ENCODE measurements at regions of chrX and their contacts with region 1.

Region 1: DNA sequence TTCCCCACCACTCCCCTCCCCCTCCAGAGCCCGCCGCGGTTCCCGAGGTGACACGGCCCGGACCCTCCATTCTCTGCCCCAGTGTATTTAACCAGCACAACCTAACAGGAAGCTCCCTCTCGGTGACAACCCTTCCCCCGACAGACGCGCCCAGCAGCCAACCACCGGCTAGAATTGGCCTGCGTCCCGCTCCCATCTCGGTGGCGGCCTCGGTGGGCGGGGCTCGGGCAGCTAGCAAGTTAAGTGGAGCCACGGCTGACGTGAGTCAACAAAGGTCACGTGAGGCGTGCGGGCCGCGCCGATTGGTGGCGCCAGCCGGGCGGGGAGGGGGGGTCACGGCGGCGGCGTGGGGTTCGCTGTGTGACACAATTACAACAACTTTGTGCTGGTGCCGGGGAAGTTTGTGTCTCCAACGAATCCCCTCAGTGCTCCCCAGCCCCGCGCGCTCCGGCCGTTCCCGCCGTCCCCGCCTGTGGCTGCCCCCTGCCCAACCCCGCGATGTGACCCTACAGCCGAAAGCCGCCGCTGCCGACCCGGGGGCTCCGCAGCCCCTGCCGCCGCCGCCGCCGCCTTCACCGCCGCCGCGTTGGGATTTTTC is at the start of gene KDM6A:
- H3K4me3 ChIP-seq: peak within 1 kb of the TSS; percentile 94
- H3K27ac ChIP-seq: peak within 1 kb of the TSS; percentile 99
- H3K4me1 ChIP-seq: no peaks in the 10 kb centered on the region
- CTCF ChIP-seq: no peak

Region 2: GRCh38 chrX:44542567-44543325 is 330.2 kb before region 1 on chrX and contains the start of gene FUNDC1:
- CTCF ChIA-PET with region 1: no interaction called
- POLR2A ChIA-PET with region 1: interaction called, 13 read pairs
- H3K4me3 ChIP-seq: peak within 1 kb of the TSS; percentile 93
- H3K27ac ChIP-seq: peak within 1 kb of the TSS; percentile 73
- H3K4me1 ChIP-seq: no peaks in the 10 kb centered on the region
- CTCF ChIP-seq: peak; percentile 28; the same call in 1 of the 2 replicates

Region 3: GRCh38 chrX:44637282-44637681 is 235.6 kb before region 1 on chrX:
- CTCF ChIA-PET with region 1: no interaction called
- POLR2A ChIA-PET with region 1: no interaction called
- H3K4me3 ChIP-seq: no peak overlapping the region
- H3K27ac ChIP-seq: no peak overlapping the region
- H3K4me1 ChIP-seq: no peaks in the 10 kb centered on the region; the same call in 1 of the 2 replicates
- CTCF ChIP-seq: no peak

Region 4: DNA sequence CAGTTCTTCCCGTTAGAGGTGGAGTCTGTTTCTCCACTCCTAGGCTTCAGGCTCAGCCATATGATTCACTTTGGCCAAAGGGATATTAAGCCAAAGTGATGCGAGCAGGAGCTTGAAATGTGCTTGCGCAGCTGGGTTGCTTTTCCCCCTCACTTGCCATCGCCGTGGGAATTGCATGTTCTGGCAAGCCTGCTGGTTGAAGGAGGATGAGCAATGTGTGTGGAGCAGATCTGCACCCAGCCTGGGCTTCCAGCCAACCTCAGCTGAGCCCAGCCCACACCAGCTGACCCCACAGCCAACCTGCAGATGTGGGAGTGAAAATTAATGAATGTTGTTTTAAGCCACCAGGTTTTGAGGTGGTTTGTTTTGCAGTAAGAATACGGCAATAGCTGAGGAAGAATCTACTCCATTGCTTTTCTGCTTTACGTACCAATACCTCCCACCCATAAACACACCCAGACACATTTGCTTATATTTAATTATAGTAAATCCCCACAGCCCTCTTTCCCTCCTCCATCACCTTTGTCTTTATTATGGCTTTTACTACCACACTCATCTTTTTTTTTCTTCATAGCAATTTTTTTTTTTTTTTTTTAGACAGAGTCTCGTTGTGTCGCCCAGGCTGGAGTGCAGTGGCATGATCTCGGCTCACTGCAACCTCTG is 197.4 kb before region 1 on chrX:
- CTCF ChIA-PET with region 1: no interaction called
- POLR2A ChIA-PET with region 1: interaction called, 12 read pairs
- H3K4me3 ChIP-seq: no peak overlapping the region
- H3K27ac ChIP-seq: peak overlapping the region; percentile 54
- H3K4me1 ChIP-seq: peaks cover 11% of the 10 kb centered on the region
- CTCF ChIP-seq: no peak

Region 5: DNA sequence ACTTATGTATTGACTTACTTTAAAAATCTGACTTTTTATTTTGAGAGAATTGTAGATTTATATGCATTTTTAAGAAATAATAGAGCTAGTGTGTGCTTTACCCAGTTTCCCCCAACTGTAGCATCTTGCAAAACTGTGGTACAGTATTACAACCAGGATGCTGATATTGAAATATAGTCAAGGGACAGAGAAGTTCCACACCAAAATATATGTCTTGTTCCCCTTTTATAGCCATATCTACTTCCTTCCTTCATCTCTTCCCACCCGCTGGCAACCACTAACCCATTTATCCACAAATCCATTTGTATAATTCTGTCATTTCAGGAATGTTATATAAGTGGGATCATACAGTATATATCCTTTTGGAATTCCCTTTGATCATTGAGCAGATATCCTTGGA is 16.9 kb after region 1 on chrX:
- CTCF ChIA-PET with region 1: interaction called, 4 read pairs
- POLR2A ChIA-PET with region 1: interaction called, 12 read pairs
- H3K4me3 ChIP-seq: no peak overlapping the region
- H3K27ac ChIP-seq: no peak overlapping the region
- H3K4me1 ChIP-seq: no peaks in the 10 kb centered on the region
- CTCF ChIP-seq: no peak